Activated CD4-positive, alpha-beta T cell treated with anti-CD3 and anti-CD28 coated beads, Interleukin-2, amount 10 ng/mL, durations not matched to agents 24 days and 14 days (primary cell): ENCODE measurements at regions of chr5 and their contacts with region 1.

Region 1: GRCh38 chr5:175534070-175534932 is 55.9 kb downstream of the SFXN1 start:
- DNase-seq: peak; percentile 96
- H3K4me3 Mint-ChIP-seq: peak overlapping the region; percentile 78
- H3K27ac Mint-ChIP-seq: peak overlapping the region; percentile 73
- H3K4me1 Mint-ChIP-seq: peaks cover 50% of the 10 kb centered on the region
- H3K27me3 Mint-ChIP-seq: no peaks in the 10 kb centered on the region

Region 2: GRCh38 chr5:175567954-175568353 is 33.7 kb after region 1 on chr5:
- intact Hi-C with region 1: loop called (anchors 1 kb)
- DNase-seq: no peak
- H3K4me3 Mint-ChIP-seq: no peak overlapping the region
- H3K27ac Mint-ChIP-seq: no peak overlapping the region
- H3K4me1 Mint-ChIP-seq: peaks cover 4% of the 10 kb centered on the region
- H3K27me3 Mint-ChIP-seq: peaks cover 17% of the 10 kb centered on the region

Region 3: GRCh38 chr5:175696139-175696854 is 162.0 kb after region 1 on chr5:
- intact Hi-C with region 1: loop called (anchors 1 kb)
- DNase-seq: peak; percentile 92
- H3K4me3 Mint-ChIP-seq: peak overlapping the region; percentile 62
- H3K27ac Mint-ChIP-seq: peak overlapping the region; percentile 85
- H3K4me1 Mint-ChIP-seq: peaks cover 33% of the 10 kb centered on the region
- H3K27me3 Mint-ChIP-seq: no peaks in the 10 kb centered on the region

Region 4: DNA sequence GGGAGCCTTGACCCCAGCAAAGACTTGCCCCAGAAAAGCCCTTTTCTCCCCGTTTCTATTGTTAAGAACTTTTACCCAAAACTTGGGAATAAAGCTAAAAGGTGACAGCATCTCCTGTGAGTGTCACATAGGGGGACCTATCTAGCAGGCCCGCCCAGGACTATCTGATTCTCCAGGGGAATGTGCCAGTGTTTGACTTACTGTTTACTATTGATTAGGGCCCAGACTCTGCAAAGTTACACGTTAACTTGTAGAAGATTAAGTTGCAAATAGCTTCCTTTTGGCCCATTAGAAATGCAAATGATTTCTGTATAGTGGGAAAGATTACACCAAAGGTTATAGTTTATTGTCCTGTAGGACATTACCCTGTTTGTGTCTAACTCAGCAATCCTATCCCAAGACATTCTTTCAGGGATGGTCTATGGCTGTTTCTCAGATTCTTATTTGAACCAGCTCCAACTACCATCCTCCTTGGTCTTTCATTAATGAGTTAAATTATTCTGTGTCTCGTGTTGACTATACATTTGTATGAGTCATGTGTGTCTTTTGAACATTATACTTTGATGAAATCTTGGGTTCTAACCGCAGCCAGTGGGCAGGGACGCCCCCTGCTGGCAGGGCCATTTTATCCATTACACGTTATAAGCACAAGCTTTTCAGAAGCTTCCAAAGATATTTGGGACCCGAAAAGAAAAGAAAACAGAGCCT is 184.3 kb after region 1 on chr5:
- intact Hi-C with region 1: loop called (anchors 2 kb)
- DNase-seq: peak; percentile 86
- H3K4me3 Mint-ChIP-seq: no peak overlapping the region
- H3K27ac Mint-ChIP-seq: no peak overlapping the region
- H3K4me1 Mint-ChIP-seq: peaks cover 4% of the 10 kb centered on the region
- H3K27me3 Mint-ChIP-seq: peaks cover 1% of the 10 kb centered on the region

Region 5: DNA sequence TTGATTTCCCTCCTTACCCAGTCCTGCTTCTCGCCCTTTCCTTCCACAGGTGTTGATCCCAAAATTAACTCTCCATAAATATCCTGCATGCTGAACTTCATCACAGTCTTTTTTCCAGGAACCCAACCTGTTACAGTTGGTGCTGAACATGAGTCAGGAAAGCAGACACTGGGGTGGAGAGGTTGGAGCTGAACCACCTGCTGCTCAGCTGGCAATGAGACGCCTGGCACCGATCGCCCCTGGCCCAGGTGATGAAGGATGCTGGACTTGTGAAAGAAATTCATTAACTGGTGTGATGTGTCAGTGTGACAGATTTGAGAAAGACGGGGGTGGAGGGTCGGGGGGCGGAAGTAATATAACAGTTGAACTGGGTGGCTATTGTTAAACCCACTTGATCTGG is 367.7 kb after region 1 on chr5:
- intact Hi-C with region 1: loop called (anchors 5 kb)
- DNase-seq: no peak
- H3K4me3 Mint-ChIP-seq: no peak overlapping the region
- H3K27ac Mint-ChIP-seq: no peak overlapping the region
- H3K4me1 Mint-ChIP-seq: no peaks in the 10 kb centered on the region
- H3K27me3 Mint-ChIP-seq: peaks cover 9% of the 10 kb centered on the region